GM12878 (cell line): ENCODE measurements at regions of chr2 and their contacts with region 1.

Region 1: DNA sequence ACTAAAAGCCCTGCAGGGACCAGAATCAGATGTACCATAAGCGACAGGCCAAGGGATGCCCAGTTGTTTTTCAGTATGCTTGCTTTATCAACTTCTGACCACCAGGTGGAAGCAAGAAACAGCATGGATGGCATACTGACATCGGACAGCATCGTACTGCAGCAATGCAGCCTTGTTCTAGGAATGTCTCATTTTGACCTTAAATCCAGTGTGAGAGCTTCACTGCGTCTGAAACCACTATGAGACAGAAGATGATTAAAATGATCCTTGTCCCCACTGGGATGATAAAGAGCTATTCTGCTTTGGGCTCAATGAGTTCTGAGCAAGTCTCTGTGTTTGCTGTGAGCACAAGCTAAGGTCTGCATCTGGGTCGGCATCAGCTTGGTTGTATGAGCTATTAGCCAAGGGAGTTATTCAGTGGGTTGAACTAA is 54.3 kb downstream of the CDK15 start:
- DNase-seq: peak; percentile 43
- ATAC-seq: peak; percentile 95
- H3K4me3 ChIP-seq: no peak overlapping the region
- H3K27ac ChIP-seq: no peak overlapping the region
- H3K4me1 ChIP-seq: no peaks in the 10 kb centered on the region
- H3K27me3 ChIP-seq: peaks cover 0 to 5% of the 10 kb centered on the region in 2 experiments; a peak in 2 of 4 replicates
- CTCF ChIP-seq: peak; percentile 75 to 86 (median 79)
- EP300 ChIP-seq: no peak
- POLR2A ChIP-seq: no peak
- RAD21 ChIP-seq: peak; percentile 95

Region 2: DNA sequence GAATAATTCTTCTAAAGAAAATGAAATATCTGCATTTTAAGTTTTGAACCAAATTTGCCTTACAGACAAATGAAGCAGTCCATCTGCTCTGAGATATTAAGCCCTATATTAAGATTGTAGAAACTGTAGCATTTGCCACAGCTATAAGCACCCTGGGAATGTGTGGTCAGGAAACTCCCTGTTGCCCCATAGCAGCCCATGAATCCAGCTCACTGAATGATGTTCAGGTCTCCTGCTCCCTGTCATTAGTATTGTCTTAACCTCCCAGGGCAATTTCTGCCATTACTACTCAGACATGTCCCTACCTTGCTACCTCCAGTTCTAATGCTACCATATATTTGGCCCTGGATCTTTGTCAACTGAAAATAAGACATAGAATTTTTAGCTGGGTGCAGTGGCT is 13.2 kb before region 1 on chr2:
- CTCF ChIA-PET with region 1: interaction called, 24 read pairs
- POLR2A ChIA-PET with region 1: no interaction called
- RAD21 ChIA-PET with region 1: interaction called, 4 read pairs
- SMC1A ChIA-PET with region 1: interaction called, 5 read pairs
- in situ Hi-C with region 1: no loop called
- intact Hi-C with region 1: no loop called
- DNase-seq: no peak
- ATAC-seq: no peak
- H3K4me3 ChIP-seq: no peak overlapping the region
- H3K27ac ChIP-seq: no peak overlapping the region
- H3K4me1 ChIP-seq: no peaks in the 10 kb centered on the region
- H3K27me3 ChIP-seq: no peaks in the 10 kb centered on the region
- CTCF ChIP-seq: no peak
- EP300 ChIP-seq: no peak
- POLR2A ChIP-seq: no peak
- RAD21 ChIP-seq: no peak

Region 3: GRCh38 chr2:201964631-201965206 is 104.1 kb after region 1 on chr2:
- CTCF ChIA-PET with region 1: interaction called, 19 read pairs
- POLR2A ChIA-PET with region 1: no interaction called
- RAD21 ChIA-PET with region 1: interaction called, 11 read pairs
- SMC1A ChIA-PET with region 1: interaction called, 4 read pairs
- in situ Hi-C with region 1: no loop called
- intact Hi-C with region 1: loop called (anchors 5 kb)
- DNase-seq: no peak
- ATAC-seq: peak; percentile 24; the same call in 1 of the 3 replicates
- H3K4me3 ChIP-seq: no peak overlapping the region
- H3K27ac ChIP-seq: no peak overlapping the region
- H3K4me1 ChIP-seq: no peaks in the 10 kb centered on the region
- H3K27me3 ChIP-seq: no peaks in the 10 kb centered on the region
- CTCF ChIP-seq: no peak
- EP300 ChIP-seq: no peak
- POLR2A ChIP-seq: no peak
- RAD21 ChIP-seq: no peak

Region 4: GRCh38 chr2:202043475-202043874 is 182.8 kb after region 1 on chr2:
- CTCF ChIA-PET with region 1: interaction called, 15 read pairs
- POLR2A ChIA-PET with region 1: no interaction called
- RAD21 ChIA-PET with region 1: no interaction called
- SMC1A ChIA-PET with region 1: interaction called, 11 read pairs
- in situ Hi-C with region 1: no loop called
- intact Hi-C with region 1: no loop called
- DNase-seq: no peak
- ATAC-seq: peak; percentile 48; the same call in 2 of the 3 replicates
- H3K4me3 ChIP-seq: no peak overlapping the region
- H3K27ac ChIP-seq: no peak overlapping the region
- H3K4me1 ChIP-seq: peaks cover 7% of the 10 kb centered on the region
- H3K27me3 ChIP-seq: peaks cover 0 to 9% of the 10 kb centered on the region in 2 experiments; a peak in 2 of 4 replicates
- CTCF ChIP-seq: no peak
- EP300 ChIP-seq: no peak
- POLR2A ChIP-seq: no peak
- RAD21 ChIP-seq: no peak

Region 5: DNA sequence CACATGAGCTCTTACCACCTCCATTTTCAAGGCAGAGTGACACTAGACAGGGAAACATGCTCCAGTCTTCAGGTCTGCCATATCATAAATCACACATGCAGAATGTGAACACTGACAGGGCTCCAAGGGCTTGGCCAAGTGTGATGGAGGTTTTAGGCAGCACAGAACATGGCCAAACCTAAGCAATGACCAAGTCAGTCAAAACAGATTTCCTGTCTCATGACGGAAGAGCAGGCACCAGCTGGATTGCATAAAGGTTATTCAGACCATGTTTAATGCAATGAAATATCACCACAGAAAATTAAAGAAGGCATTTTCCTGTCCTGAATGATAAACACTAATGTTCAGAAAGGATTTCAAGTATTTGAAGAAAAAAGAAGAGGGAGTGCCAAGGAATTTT is 305.3 kb after region 1 on chr2:
- CTCF ChIA-PET with region 1: interaction called, 6 read pairs
- POLR2A ChIA-PET with region 1: no interaction called
- RAD21 ChIA-PET with region 1: no interaction called
- SMC1A ChIA-PET with region 1: interaction called, 4 read pairs
- in situ Hi-C with region 1: loop called (anchors 5 kb)
- intact Hi-C with region 1: no loop called
- DNase-seq: no peak
- ATAC-seq: no peak
- H3K4me3 ChIP-seq: no peak overlapping the region
- H3K27ac ChIP-seq: no peak overlapping the region
- H3K4me1 ChIP-seq: no peaks in the 10 kb centered on the region
- H3K27me3 ChIP-seq: no peaks in the 10 kb centered on the region
- CTCF ChIP-seq: no peak
- EP300 ChIP-seq: no peak
- POLR2A ChIP-seq: no peak
- RAD21 ChIP-seq: no peak